Activated T-helper 2 cell treated with anti-CD3 and anti-CD28 coated beads, Interferon-gamma antibody, Interleukin-2, Interleukin-4, amounts not matched to agents 10 μg/mL and 5 μg/mL and 100 μg/mL, durations not matched to agents 14 hours and 24 hours and 36 hours (primary cell): ENCODE measurements at regions of chr2 and their contacts with region 1.

Region 1: GRCh38 chr2:203636588-203637470 is 69.6 kb upstream of the CD28 start:
- DNase-seq: no peak
- H3K4me3 Mint-ChIP-seq: no peak overlapping the region
- H3K27ac Mint-ChIP-seq: peak overlapping the region; percentile 15
- H3K4me1 Mint-ChIP-seq: peaks cover 22% of the 10 kb centered on the region
- H3K27me3 Mint-ChIP-seq: no peaks in the 10 kb centered on the region

Region 2: DNA sequence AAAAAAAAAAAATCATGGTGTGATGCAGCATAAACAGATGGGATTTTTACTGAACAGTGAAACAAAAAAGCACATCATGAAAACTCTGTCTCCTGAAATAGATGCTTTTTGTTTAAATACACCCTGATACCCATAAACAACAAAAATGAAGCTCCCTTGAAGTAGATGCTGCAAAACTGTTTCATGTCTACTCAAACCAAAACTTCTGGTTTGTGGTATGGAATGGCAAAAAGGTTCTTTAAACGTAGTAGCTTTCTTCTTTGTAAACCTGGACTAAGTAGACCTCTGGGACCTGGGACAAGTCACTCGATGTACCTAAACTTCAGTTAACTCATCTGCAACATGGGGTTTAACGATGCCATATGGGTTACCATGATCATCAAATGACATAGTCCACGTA is 37.3 kb before region 1 on chr2:
- intact Hi-C with region 1: loop called (anchors 5 kb)
- DNase-seq: no peak
- H3K4me3 Mint-ChIP-seq: no peak overlapping the region
- H3K27ac Mint-ChIP-seq: no peak overlapping the region
- H3K4me1 Mint-ChIP-seq: peaks cover 35% of the 10 kb centered on the region
- H3K27me3 Mint-ChIP-seq: peaks cover 51% of the 10 kb centered on the region

Region 3: GRCh38 chr2:203623096-203623495 is 13.7 kb before region 1 on chr2:
- intact Hi-C with region 1: no loop called
- DNase-seq: no peak
- H3K4me3 Mint-ChIP-seq: no peak overlapping the region
- H3K27ac Mint-ChIP-seq: no peak overlapping the region
- H3K4me1 Mint-ChIP-seq: peaks cover 8% of the 10 kb centered on the region
- H3K27me3 Mint-ChIP-seq: peaks cover 3% of the 10 kb centered on the region

Region 4: DNA sequence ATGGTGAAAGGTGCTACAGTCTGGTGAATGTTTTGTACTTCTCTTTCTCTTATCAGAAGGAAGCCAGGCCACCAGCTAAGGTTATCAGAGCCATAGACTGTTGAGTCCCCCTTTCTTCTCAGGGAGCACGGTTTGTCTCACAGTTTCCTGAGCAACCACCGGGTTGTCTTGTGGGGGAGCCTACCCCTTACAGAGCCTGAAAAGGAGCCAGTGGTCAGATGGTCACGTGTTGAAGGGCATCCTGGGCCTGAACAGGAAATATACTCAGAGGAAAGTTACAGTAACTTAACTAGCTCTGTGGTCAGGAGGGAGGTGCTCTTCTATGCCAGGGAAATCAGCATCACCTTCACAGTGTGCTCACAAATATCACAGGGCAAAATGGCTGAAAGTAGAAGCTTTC is 81.3 kb after region 1 on chr2:
- intact Hi-C with region 1: no loop called
- DNase-seq: peak; percentile 66
- H3K4me3 Mint-ChIP-seq: peak overlapping the region; percentile 48
- H3K27ac Mint-ChIP-seq: peak overlapping the region; percentile 91
- H3K4me1 Mint-ChIP-seq: peaks cover 93% of the 10 kb centered on the region
- H3K27me3 Mint-ChIP-seq: no peaks in the 10 kb centered on the region